ENCODE measurements at regions of chr7 and their contacts with region 1.

Region 1: DNA sequence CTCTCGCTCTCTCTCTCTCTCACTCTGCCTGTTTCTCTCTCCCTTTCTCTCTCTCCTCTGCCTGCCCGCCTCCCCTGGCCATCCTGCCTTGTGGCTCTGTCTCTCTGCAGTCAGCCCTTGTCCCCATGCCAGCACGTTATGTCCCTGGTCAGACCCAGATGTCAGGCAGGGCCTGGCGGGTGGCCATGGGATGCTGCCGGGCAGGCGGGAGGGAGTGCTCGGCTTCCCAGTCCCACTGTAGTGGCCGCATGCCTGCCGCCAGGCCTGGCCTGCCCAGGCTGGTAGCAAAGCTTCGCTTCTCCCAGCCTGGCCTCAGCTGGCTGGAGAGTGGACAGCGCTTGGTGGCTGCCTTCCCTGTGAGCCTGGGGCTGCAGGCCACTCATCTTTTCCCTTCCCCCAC is 121.5 kb upstream of the ZNF716 start:
- DNase-seq: no peak
- ATAC-seq: no peak
- H3K4me3 ChIP-seq: no peak overlapping the region
- H3K27ac ChIP-seq: no peak overlapping the region
- H3K4me1 ChIP-seq: no peaks in the 10 kb centered on the region
- H3K27me3 ChIP-seq: no peaks in the 10 kb centered on the region
- CTCF ChIP-seq: no peak
- POLR2A ChIP-seq: no peak

Region 2: GRCh38 chr7:57375783-57376182 is 47.3 kb after region 1 on chr7:
- intact Hi-C with region 1: loop called (anchors 5 kb)
- DNase-seq: peak in 2 of 4 donors; percentile 16 to 42
- ATAC-seq: peak; percentile 30
- H3K4me3 ChIP-seq: no peak overlapping the region
- H3K27ac ChIP-seq: no peak overlapping the region
- H3K4me1 ChIP-seq: no peaks in the 10 kb centered on the region
- H3K27me3 ChIP-seq: no peaks in the 10 kb centered on the region
- CTCF ChIP-seq: no peak
- POLR2A ChIP-seq: no peak

Measured in body of pancreas (tissue), 4 donors.